B cell (primary cell): ENCODE measurements at regions of chr9 and their contacts with region 1.

Region 1: GRCh38 chr9:128881901-128882681 is at the starts of genes KYAT1 and LRRC8A:
- DNase-seq: peak; percentile 97
- ATAC-seq: peak; percentile 92
- H3K4me3 ChIP-seq: peak within 1 kb of the TSS; percentile 88 to 95 (median 91)
- H3K4me3 Mint-ChIP-seq: peak within 1 kb of the TSS; percentile 98
- H3K27ac ChIP-seq: peak within 1 kb of the TSS; percentile 51 to 83
- H3K27ac Mint-ChIP-seq: peak within 1 kb of the TSS; percentile 99
- H3K4me1 ChIP-seq: peaks cover 15 to 37% of the 10 kb centered on the region in 2 donors
- H3K4me1 Mint-ChIP-seq: peaks cover 38% of the 10 kb centered on the region
- H3K27me3 ChIP-seq: no peaks in the 10 kb centered on the region
- H3K27me3 Mint-ChIP-seq: no peaks in the 10 kb centered on the region
- CTCF ChIP-seq: peak; percentile 26
- total RNA-seq, gene KYAT1: 6.4 and 7.0 TPM in 2 replicates
- total RNA-seq, gene LRRC8A: 14.5 and 15.1 TPM in 2 replicates

Region 2: GRCh38 chr9:127715394-127716337 is 1166.4 kb before region 1 on chr9 and contains the starts of genes PTRH1 and TTC16:
- CTCF ChIA-PET with region 1: no interaction called
- POLR2A ChIA-PET with region 1: no interaction called
- intact Hi-C with region 1: loop called (anchors 5 kb)
- DNase-seq: peak; percentile 98
- ATAC-seq: peak; percentile 95
- H3K4me3 ChIP-seq: peak within 1 kb of the TSS; percentile 16 to 90 (median 66)
- H3K4me3 Mint-ChIP-seq: peak within 1 kb of the TSS; percentile 97
- H3K27ac ChIP-seq: peak within 1 kb of the TSS; percentile 35 to 81
- H3K27ac Mint-ChIP-seq: peak within 1 kb of the TSS; percentile 90
- H3K4me1 ChIP-seq: peaks cover 9 to 16% of the 10 kb centered on the region in 2 donors
- H3K4me1 Mint-ChIP-seq: peaks cover 26% of the 10 kb centered on the region
- H3K27me3 ChIP-seq: no peaks in the 10 kb centered on the region
- H3K27me3 Mint-ChIP-seq: no peaks in the 10 kb centered on the region
- CTCF ChIP-seq: no peak
- total RNA-seq, gene PTRH1: 6.2 and 7.6 TPM in 2 replicates
- total RNA-seq, gene TTC16: not detected in 2 replicates

Region 3: GRCh38 chr9:128370826-128371621 is 511.1 kb before region 1 on chr9 and contains the start of gene URM1:
- CTCF ChIA-PET with region 1: no interaction called
- POLR2A ChIA-PET with region 1: no interaction called
- intact Hi-C with region 1: loop called (anchors 5 kb)
- DNase-seq: peak; percentile 96
- ATAC-seq: peak; percentile 94
- H3K4me3 ChIP-seq: peak within 1 kb of the TSS; percentile 86 to 98 (median 90)
- H3K4me3 Mint-ChIP-seq: peak within 1 kb of the TSS; percentile 95
- H3K27ac ChIP-seq: peak within 1 kb of the TSS; percentile 83 to 96
- H3K27ac Mint-ChIP-seq: peak within 1 kb of the TSS; percentile 96
- H3K4me1 ChIP-seq: peaks cover 15 to 23% of the 10 kb centered on the region in 2 donors
- H3K4me1 Mint-ChIP-seq: peaks cover 30% of the 10 kb centered on the region
- H3K27me3 ChIP-seq: no peaks in the 10 kb centered on the region
- H3K27me3 Mint-ChIP-seq: no peaks in the 10 kb centered on the region
- CTCF ChIP-seq: no peak
- total RNA-seq, gene URM1: 35.6 and 43.8 TPM in 2 replicates

Region 4: GRCh38 chr9:128750926-128751595 is 131.0 kb before region 1 on chr9:
- CTCF ChIA-PET with region 1: no interaction called
- POLR2A ChIA-PET with region 1: no interaction called
- intact Hi-C with region 1: no loop called
- DNase-seq: peak; percentile 3
- ATAC-seq: no peak
- H3K4me3 ChIP-seq: no peak overlapping the region
- H3K4me3 Mint-ChIP-seq: no peak overlapping the region
- H3K27ac ChIP-seq: no peak overlapping the region
- H3K27ac Mint-ChIP-seq: no peak overlapping the region
- H3K4me1 ChIP-seq: no peaks in the 10 kb centered on the region
- H3K4me1 Mint-ChIP-seq: no peaks in the 10 kb centered on the region
- H3K27me3 ChIP-seq: no peaks in the 10 kb centered on the region
- H3K27me3 Mint-ChIP-seq: no peaks in the 10 kb centered on the region
- CTCF ChIP-seq: no peak

Region 5: GRCh38 chr9:128786681-128787601 is 95.2 kb before region 1 on chr9 and contains the start of gene TBC1D13:
- CTCF ChIA-PET with region 1: no interaction called
- POLR2A ChIA-PET with region 1: no interaction called
- intact Hi-C with region 1: loop called (anchors 1 kb)
- DNase-seq: peak; percentile 96
- ATAC-seq: peak; percentile 96
- H3K4me3 ChIP-seq: peak within 1 kb of the TSS; percentile 71 to 94 (median 91)
- H3K4me3 Mint-ChIP-seq: peak within 1 kb of the TSS; percentile 91
- H3K27ac ChIP-seq: peak within 1 kb of the TSS; percentile 73 to 86
- H3K27ac Mint-ChIP-seq: peak within 1 kb of the TSS; percentile 85
- H3K4me1 ChIP-seq: peaks cover 18 to 21% of the 10 kb centered on the region in 2 donors
- H3K4me1 Mint-ChIP-seq: peaks cover 24% of the 10 kb centered on the region
- H3K27me3 ChIP-seq: no peaks in the 10 kb centered on the region
- H3K27me3 Mint-ChIP-seq: no peaks in the 10 kb centered on the region
- CTCF ChIP-seq: no peak
- total RNA-seq, gene TBC1D13: 29.1 and 31.8 TPM in 2 replicates

Region 6: GRCh38 chr9:128863647-128864046 is 18.4 kb before region 1 on chr9:
- CTCF ChIA-PET with region 1: interaction called, 13 read pairs
- POLR2A ChIA-PET with region 1: no interaction called
- intact Hi-C with region 1: loop called (anchors 2 kb)
- DNase-seq: peak; percentile 86
- ATAC-seq: peak; percentile 98
- H3K4me3 ChIP-seq: no peak overlapping the region
- H3K4me3 Mint-ChIP-seq: no peak overlapping the region
- H3K27ac ChIP-seq: no peak overlapping the region
- H3K27ac Mint-ChIP-seq: peak overlapping the region; percentile 37
- H3K4me1 ChIP-seq: peaks cover 3 to 4% of the 10 kb centered on the region in 2 donors
- H3K4me1 Mint-ChIP-seq: peaks cover 4% of the 10 kb centered on the region
- H3K27me3 ChIP-seq: no peaks in the 10 kb centered on the region
- H3K27me3 Mint-ChIP-seq: no peaks in the 10 kb centered on the region
- CTCF ChIP-seq: peak; percentile 92

Region 7: GRCh38 chr9:128947422-128948301 is 65.6 kb after region 1 on chr9 and contains the starts of genes DOLK and NUP188:
- CTCF ChIA-PET with region 1: no interaction called
- POLR2A ChIA-PET with region 1: no interaction called
- intact Hi-C with region 1: loop called (anchors 1 kb)
- DNase-seq: peak; percentile 98
- ATAC-seq: peak; percentile 86
- H3K4me3 ChIP-seq: peak within 1 kb of the TSS; percentile 64 to 95 (median 84)
- H3K4me3 Mint-ChIP-seq: peak within 1 kb of the TSS; percentile 97
- H3K27ac ChIP-seq: peak within 1 kb of the TSS; percentile 91 to 96
- H3K27ac Mint-ChIP-seq: peak within 1 kb of the TSS; percentile 98
- H3K4me1 ChIP-seq: peaks cover 15 to 18% of the 10 kb centered on the region in 2 donors
- H3K4me1 Mint-ChIP-seq: peaks cover 27% of the 10 kb centered on the region
- H3K27me3 ChIP-seq: no peaks in the 10 kb centered on the region
- H3K27me3 Mint-ChIP-seq: no peaks in the 10 kb centered on the region
- CTCF ChIP-seq: no peak
- total RNA-seq, gene DOLK: 11.1 and 12.2 TPM in 2 replicates
- total RNA-seq, gene NUP188: 83.6 and 93.2 TPM in 2 replicates